Activated CD4-positive, alpha-beta T cell treated with anti-CD3 and anti-CD28 coated beads, Interleukin-2, amount 10 ng/mL, durations not matched to agents 24 days and 14 days (primary cell): ENCODE measurements at regions of chr2 and their contacts with region 1.

Region 1: GRCh38 chr2:218216674-218217359 is at the start of gene ARPC2:
- DNase-seq: peak; percentile 99
- H3K4me3 Mint-ChIP-seq: peak within 1 kb of the TSS; percentile 89
- H3K27ac Mint-ChIP-seq: peak within 1 kb of the TSS; percentile 94
- H3K4me1 Mint-ChIP-seq: peaks cover 37% of the 10 kb centered on the region
- H3K27me3 Mint-ChIP-seq: peaks cover 4% of the 10 kb centered on the region
- total RNA-seq, gene ARPC2: 515 and 516 TPM in 2 replicates

Region 2: DNA sequence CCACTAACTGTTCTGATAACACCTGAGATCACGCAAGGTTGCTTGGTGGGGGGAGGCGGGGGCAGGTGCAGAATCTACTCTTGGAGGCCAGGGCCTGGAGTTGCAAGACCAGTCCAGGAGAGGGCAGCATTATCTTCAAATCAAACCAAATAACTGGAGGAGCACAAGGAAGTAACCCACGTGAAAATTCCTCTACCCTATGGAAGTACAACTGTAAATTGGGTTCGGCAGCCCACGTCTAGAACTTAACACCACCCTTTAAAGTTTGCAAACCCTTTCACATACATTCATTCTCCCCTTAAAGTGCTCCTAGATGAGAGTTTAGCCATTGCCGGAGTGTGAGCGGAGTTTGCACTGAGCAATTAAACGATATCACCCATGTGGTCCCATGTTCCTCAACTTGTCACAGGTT is 30.5 kb before region 1 on chr2:
- intact Hi-C with region 1: loop called (anchors 2 kb)
- DNase-seq: peak; percentile 90
- H3K4me3 Mint-ChIP-seq: no peak overlapping the region
- H3K27ac Mint-ChIP-seq: no peak overlapping the region
- H3K4me1 Mint-ChIP-seq: peaks cover 8% of the 10 kb centered on the region
- H3K27me3 Mint-ChIP-seq: peaks cover 13% of the 10 kb centered on the region

Region 3: GRCh38 chr2:218229239-218229638 is 12.4 kb after region 1 on chr2:
- intact Hi-C with region 1: loop called (anchors 1 kb)
- DNase-seq: peak; percentile 85
- H3K4me3 Mint-ChIP-seq: peak overlapping the region; percentile 80
- H3K27ac Mint-ChIP-seq: peak overlapping the region; percentile 93
- H3K4me1 Mint-ChIP-seq: peaks cover 58% of the 10 kb centered on the region
- H3K27me3 Mint-ChIP-seq: no peaks in the 10 kb centered on the region

Region 4: GRCh38 chr2:218245214-218245613 is 28.4 kb after region 1 on chr2:
- intact Hi-C with region 1: no loop called
- DNase-seq: no peak
- H3K4me3 Mint-ChIP-seq: no peak overlapping the region
- H3K27ac Mint-ChIP-seq: peak overlapping the region; percentile 70
- H3K4me1 Mint-ChIP-seq: peaks cover 19% of the 10 kb centered on the region
- H3K27me3 Mint-ChIP-seq: no peaks in the 10 kb centered on the region

Region 5: DNA sequence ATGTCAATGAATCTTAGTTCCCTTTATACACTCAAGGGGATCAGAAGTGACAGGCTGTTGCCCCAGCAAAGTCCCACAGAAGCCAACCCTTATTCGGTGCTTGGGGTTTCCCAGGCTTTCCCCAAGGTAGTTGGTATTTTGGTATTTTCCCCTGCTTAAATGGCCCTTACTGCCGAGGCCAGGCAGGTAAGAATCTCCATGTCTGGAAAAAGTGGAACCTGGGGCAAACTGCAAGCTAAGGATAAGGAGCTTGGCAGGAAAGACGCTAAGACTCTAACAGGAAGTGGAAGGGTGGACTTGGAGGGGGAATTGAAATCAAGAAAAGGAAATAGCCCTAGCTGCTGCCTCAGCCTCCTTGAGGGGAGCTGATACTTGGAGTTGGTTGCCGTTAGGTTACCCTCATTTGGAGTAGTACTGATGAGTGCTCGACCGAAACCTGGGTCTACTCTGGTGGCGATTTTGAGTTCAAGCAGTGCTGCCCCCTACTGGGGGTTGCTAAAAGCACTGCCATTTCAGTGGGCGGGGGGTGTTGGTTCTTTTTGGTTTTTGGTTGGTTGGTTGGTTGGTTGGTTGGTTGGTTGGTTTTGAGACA is 40.7 kb after region 1 on chr2:
- intact Hi-C with region 1: loop called (anchors 2 kb)
- DNase-seq: peak; percentile 89
- H3K4me3 Mint-ChIP-seq: peak overlapping the region; percentile 21
- H3K27ac Mint-ChIP-seq: peak overlapping the region; percentile 90
- H3K4me1 Mint-ChIP-seq: peaks cover 23% of the 10 kb centered on the region
- H3K27me3 Mint-ChIP-seq: no peaks in the 10 kb centered on the region

Region 6: DNA sequence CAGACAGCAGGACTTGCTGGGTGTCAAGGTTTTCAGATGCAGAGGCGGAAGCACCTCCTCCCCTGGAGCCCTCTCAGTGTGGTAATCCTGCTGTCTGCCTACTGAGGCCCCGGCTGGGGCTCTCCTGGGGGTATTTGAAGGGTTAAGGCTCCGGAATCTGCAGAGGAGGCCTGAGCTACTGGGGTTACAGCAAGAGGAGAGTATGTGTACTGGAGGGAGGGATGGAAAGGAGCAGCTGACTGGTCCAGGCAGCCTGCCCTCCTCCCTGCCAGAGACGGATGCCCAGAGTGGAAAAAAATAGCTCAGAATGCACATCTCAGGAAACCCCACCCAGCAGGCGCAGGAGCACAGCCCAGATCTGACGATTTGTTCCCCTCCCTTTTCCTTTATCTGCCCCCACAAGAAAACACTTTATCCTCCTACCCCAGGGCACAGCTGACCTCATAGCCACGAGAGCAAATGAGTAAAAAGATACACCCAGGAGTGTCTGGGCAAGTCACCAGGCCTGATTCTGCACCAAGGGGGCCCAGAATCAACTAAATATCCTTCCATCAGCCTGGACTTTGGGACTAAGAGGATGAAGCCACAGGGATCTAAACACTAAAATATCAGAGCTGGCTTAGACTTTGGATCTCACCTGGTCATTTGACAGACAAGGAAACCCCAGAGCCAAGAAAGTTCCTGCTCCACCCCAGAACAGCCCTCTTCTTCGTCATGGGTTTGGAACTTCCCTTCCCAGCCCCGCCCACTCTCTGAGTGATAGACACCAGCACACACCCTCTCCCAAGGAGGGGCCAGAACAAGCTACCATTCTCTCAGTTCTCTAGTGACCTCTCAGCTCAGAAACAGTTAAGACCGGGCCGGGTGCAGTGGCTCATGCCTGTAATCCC is 70.0 kb after region 1 on chr2:
- intact Hi-C with region 1: loop called (anchors 2 kb)
- DNase-seq: peak; percentile 95
- H3K4me3 Mint-ChIP-seq: peak overlapping the region; percentile 86
- H3K27ac Mint-ChIP-seq: peak overlapping the region; percentile 92
- H3K4me1 Mint-ChIP-seq: peaks cover 67% of the 10 kb centered on the region
- H3K27me3 Mint-ChIP-seq: no peaks in the 10 kb centered on the region

Region 7: GRCh38 chr2:218485986-218486667 is 269.3 kb after region 1 on chr2:
- intact Hi-C with region 1: no loop called
- DNase-seq: no peak
- H3K4me3 Mint-ChIP-seq: no peak overlapping the region
- H3K27ac Mint-ChIP-seq: no peak overlapping the region
- H3K4me1 Mint-ChIP-seq: peaks cover 13% of the 10 kb centered on the region
- H3K27me3 Mint-ChIP-seq: no peaks in the 10 kb centered on the region